ENCODE measurements at regions of chr1 and their contacts with region 1.

Region 1: DNA sequence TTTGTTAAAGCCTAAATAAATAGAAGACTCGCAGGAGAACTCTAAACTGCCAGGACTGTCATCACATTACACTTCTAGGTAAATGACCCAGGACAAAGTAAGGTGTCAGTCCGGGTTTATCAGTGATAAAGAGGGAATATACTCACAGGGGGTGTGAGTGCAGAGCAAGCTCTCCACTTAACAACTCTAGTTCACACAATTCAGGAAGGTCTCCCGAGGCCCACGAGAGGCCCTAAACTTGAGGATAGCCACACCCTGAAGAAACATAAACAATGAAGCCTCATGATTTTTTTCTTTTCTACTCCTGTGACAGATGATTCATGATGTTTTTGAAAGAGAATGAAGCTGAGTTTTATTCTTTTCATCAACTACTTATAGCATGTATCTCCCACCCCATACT is 65.6 kb upstream of the EXO1 start:
- DNase-seq: no peak
- ATAC-seq: no peak
- H3K4me3 ChIP-seq: no peak overlapping the region
- H3K4me3 Mint-ChIP-seq: no peak overlapping the region
- H3K27ac ChIP-seq: no peak overlapping the region
- H3K27ac Mint-ChIP-seq: no peak overlapping the region
- H3K4me1 ChIP-seq: no peaks in the 10 kb centered on the region
- H3K4me1 Mint-ChIP-seq: no peaks in the 10 kb centered on the region
- H3K27me3 ChIP-seq: no peaks in the 10 kb centered on the region
- H3K27me3 Mint-ChIP-seq: peaks cover 5% of the 10 kb centered on the region
- CTCF ChIP-seq: no peak

Region 2: DNA sequence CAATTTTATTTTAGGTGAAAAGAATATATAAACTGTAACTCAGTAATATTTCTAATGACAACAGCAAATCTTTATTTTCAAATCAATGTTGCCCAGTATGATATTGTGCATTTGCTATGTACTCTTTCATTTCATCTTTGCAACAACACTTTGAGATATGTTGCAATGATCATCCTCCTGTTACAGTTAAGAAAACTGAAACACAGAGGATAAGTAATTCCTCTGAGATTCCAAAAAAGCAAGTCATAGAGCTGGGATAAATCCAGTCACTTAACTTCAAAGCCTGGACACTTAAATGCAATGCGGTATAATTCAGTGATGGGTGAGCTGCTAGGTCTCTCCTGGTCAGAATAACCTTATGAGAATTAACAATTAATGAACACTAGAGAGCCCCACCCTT is 17.0 kb after region 1 on chr1:
- CTCF ChIA-PET with region 1: interaction called, 3 read pairs
- POLR2A ChIA-PET with region 1: no interaction called
- intact Hi-C with region 1: loop called in 1 of 2 experiments (anchors 1 kb)
- DNase-seq: no peak
- ATAC-seq: no peak
- H3K4me3 ChIP-seq: no peak overlapping the region
- H3K4me3 Mint-ChIP-seq: no peak overlapping the region
- H3K27ac ChIP-seq: no peak overlapping the region
- H3K27ac Mint-ChIP-seq: no peak overlapping the region
- H3K4me1 ChIP-seq: no peaks in the 10 kb centered on the region
- H3K4me1 Mint-ChIP-seq: no peaks in the 10 kb centered on the region
- H3K27me3 ChIP-seq: no peaks in the 10 kb centered on the region
- H3K27me3 Mint-ChIP-seq: peaks cover 4% of the 10 kb centered on the region
- CTCF ChIP-seq: no peak

Region 3: GRCh38 chr1:242745079-242745478 is 962.7 kb after region 1 on chr1:
- CTCF ChIA-PET with region 1: no interaction called
- POLR2A ChIA-PET with region 1: no interaction called
- intact Hi-C with region 1: no loop called
- DNase-seq: no peak
- ATAC-seq: no peak
- H3K4me3 ChIP-seq: no peak overlapping the region
- H3K4me3 Mint-ChIP-seq: no peak overlapping the region
- H3K27ac ChIP-seq: no peak overlapping the region
- H3K27ac Mint-ChIP-seq: no peak overlapping the region
- H3K4me1 ChIP-seq: no peaks in the 10 kb centered on the region
- H3K4me1 Mint-ChIP-seq: no peaks in the 10 kb centered on the region
- H3K27me3 ChIP-seq: no peaks in the 10 kb centered on the region
- H3K27me3 Mint-ChIP-seq: no peaks in the 10 kb centered on the region
- CTCF ChIP-seq: no peak

Measured in CD4-positive, alpha-beta T cell (primary cell).